Right ventricle myocardium superior (tissue), 1 donor: ENCODE measurements at regions of chr12 and their contacts with region 1.

Region 1: GRCh38 chr12:6062757-6063735 is 61.4 kb downstream of the VWF start:
- DNase-seq: no peak
- ATAC-seq: peak; percentile 77

Region 2: DNA sequence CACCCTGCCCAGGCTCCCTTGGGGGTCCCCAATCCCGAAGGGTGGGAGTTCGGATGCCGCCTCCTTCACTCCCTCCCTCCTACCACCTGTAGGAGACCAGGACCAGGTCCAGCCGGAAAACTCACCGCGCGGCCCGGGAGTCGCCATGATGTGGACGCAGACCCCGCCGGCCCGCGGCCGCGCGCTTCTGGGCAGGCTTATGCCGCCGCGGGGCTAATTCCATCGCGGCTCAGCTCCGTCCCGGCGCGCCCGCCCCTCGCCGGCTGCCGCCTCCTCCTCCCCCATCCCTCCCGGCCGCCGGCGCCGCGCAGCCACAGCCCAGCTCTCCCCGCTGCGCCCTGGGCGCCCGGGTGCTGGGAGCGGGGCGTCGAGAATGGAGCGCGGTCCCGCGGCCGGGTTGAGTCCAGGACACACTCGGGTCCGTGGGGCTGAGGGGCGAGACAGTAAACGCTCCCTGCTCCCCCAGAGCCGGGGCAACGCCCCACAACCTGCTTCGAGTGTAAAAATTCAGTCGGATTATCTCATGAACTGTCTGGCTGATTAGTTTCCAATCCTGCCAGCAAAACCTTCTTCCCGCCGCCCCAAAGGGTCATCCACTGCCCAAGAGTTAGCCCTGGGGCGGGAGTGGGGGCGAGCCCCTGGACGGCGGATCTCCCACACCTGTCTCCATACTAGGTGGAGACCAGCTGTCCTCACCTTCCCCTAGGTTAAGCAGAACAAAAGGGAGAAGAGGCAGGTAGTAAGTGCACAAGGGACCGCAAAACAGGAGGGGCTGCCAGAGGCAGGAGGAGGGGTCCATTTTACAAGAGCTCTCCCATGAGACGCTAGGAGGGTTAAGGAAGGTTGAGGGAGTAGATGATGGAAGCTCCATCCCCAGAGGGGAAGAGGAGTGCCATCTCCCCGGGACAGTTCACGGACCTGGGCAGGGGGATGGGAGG is 117.7 kb before region 1 on chr12 and contains the start of gene ANO2:
- intact Hi-C with region 1: no loop called
- DNase-seq: no peak
- ATAC-seq: peak; percentile 74
- total RNA-seq, gene ANO2: 12.6 TPM

Region 3: DNA sequence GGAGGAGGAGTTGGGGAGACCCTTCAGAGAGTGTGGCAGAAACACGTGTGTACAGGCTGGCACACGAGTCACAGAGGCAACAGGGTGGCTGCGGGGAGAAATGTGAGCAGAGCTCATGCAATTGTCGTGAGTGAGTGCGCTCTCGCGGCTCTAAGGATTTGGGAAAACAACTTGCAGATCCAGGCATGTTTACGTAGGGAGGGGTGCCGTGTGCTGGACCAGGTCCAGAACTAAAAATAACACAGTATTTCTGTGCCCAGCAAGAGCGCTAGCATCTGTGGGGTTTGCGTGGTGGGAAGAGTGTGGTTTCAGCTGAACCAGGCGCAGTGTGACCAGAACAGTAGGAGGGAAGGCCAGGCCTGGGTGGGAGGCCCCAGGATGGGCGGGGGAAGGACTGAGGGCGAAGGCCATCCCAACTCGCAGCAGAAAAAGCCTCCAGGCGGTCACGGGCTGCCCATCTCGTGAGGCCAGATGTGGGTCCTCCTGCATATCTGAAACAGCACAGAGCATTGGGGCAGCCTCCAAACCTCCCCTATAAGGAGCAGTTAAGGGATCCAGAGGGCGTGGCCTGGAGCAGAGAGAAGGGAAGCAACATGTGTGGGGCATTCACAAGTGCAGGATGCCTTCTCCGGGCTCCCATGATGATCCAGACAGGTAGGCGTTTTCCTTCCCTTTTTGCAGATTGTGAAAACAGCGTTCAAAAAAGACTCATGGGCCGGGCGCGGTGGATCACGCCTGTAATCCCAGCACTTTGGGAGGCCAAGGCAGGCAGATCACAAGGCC is 119.3 kb after region 1 on chr12:
- intact Hi-C with region 1: loop called (anchors 10 kb)
- DNase-seq: peak; percentile 55
- ATAC-seq: peak; percentile 63

Region 4: DNA sequence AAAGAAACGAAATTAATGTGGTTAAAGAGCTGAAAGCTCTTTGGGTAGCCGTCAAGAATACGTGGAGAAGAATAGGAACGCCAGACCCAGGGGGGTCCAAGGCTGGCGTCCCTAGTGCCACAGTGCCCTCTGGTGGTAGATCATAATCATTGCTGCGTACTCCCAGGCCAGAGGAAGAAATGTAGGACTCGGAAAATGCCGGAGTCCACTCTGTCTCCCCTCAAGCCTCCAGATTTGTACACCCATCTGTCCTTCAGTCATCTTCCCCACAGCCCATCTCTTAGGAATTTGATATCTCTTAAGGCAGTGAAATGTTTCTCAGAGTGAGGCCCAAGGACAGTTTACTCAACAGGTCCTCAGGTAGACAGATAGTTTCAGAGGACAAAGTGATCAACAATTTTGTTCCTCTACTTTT is 222.0 kb after region 1 on chr12:
- intact Hi-C with region 1: loop called (anchors 2 kb)
- DNase-seq: no peak
- ATAC-seq: peak; percentile 93